ENCODE measurements at regions of chr20 and their contacts with region 1.

Region 1: DNA sequence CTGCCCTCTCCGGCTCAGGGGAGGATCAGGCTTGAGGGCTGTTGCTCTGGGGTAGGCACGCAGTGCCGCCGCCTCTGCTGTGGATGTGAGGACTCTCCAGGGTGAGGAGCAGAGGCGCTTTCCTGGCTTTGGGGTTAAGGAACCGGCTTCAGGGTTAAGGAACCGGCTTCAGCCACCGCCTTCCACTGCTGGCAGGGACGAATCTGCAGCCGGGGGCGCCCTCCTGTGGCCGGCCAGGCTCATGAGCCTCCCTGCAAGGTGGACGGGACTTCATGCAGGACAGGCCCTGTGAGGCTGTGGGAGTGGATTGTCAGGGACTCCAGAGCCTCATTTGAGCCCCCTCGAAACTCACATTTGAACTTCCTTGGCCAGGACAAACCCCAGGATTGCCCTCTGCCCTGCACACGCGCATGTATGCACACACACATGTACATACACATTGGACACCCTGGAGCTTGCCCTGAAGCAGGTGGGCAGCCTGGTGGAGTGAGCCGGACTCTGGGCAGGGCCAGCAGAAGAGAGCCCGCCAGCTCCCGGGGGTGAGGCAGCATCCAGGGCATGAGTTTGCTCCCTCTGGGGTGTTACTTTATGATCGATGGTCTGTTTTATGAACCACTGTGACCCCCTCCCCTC is 146.8 kb downstream of the PHACTR3 start:
- DNase-seq: peak; percentile 81
- ATAC-seq: peak; percentile 74

Region 2: GRCh38 chr20:59571551-59572314 is 179.4 kb before region 1 on chr20:
- intact Hi-C with region 1: loop called (anchors 10 kb)
- DNase-seq: peak; percentile 79
- ATAC-seq: peak; percentile 83

Region 3: DNA sequence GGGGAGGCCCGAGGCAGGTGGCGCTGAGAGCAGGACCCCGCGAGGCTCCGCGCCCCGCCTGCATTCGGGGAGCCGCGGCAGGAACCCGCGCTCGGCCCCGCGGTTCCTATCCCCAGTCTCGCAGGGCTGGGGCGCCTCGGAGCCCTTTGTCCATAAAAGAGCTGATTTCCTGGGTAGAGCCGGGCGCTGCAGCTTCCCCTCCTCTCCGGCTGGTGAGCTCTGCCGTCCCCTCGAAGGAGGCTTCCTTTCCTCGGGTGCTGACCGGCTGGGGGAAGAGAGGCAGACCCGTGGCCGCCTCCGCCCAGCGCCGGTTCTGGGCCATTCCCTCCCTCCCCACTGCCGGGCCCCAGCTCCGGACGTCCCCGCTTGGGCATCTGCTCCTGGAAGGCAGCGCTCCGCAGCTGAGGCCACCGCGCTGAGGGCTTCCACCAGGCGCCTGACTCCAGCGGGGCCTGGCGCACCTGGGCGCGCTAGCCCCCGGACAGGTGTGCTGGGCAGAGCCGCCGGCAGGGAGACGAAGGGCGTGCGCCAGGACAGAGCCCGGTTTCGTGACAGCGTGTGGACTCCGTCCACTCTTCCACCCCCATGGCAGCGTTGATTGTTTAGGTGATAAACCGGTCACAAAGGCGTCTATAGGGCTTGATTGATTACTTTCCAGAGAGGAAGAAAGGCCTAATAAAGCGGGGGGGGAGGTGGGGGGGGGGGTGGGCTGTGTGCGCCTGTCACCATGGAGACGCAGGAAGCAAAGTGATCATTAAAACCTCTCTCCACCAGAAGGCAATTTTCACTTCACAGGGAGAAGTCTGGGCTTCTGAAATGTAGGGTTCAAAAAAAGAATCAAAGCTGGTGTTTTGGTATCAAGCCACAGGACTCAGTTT is 145.8 kb before region 1 on chr20:
- intact Hi-C with region 1: loop called (anchors 10 kb)
- DNase-seq: no peak
- ATAC-seq: no peak

Region 4: GRCh38 chr20:61106438-61106837 is 1355.3 kb after region 1 on chr20:
- intact Hi-C with region 1: no loop called
- DNase-seq: no peak
- ATAC-seq: no peak

Measured in sciatic nerve (tissue), 2 donors.